Mammary epithelial cell (primary cell): ENCODE measurements at regions of chr14 and their contacts with region 1.

Region 1: GRCh38 chr14:105086833-105087307 is 21.6 kb upstream of the GPR132 start:
- DNase-seq: peak; percentile 76
- H3K4me3 ChIP-seq: peak overlapping the region; percentile 42 to 51 (median 50)
- H3K27ac ChIP-seq: peak overlapping the region; percentile 54
- H3K4me1 ChIP-seq: peaks cover 44% of the 10 kb centered on the region
- H3K27me3 ChIP-seq: no peaks in the 10 kb centered on the region
- CTCF ChIP-seq: peak; percentile 62 to 76

Region 2: GRCh38 chr14:104976198-104977007 is 110.5 kb before region 1 on chr14:
- CTCF ChIA-PET with region 1: no interaction called
- dilution Hi-C with region 1: no loop called
- in situ Hi-C with region 1: no loop called
- intact Hi-C with region 1: loop called (anchors 1 kb)
- DNase-seq: peak; percentile 86
- H3K4me3 ChIP-seq: peak overlapping the region; percentile 75 to 82 (median 79)
- H3K27ac ChIP-seq: no peak overlapping the region
- H3K4me1 ChIP-seq: peaks cover 78% of the 10 kb centered on the region
- H3K27me3 ChIP-seq: no peaks in the 10 kb centered on the region
- CTCF ChIP-seq: peak; percentile 81 to 97

Region 3: DNA sequence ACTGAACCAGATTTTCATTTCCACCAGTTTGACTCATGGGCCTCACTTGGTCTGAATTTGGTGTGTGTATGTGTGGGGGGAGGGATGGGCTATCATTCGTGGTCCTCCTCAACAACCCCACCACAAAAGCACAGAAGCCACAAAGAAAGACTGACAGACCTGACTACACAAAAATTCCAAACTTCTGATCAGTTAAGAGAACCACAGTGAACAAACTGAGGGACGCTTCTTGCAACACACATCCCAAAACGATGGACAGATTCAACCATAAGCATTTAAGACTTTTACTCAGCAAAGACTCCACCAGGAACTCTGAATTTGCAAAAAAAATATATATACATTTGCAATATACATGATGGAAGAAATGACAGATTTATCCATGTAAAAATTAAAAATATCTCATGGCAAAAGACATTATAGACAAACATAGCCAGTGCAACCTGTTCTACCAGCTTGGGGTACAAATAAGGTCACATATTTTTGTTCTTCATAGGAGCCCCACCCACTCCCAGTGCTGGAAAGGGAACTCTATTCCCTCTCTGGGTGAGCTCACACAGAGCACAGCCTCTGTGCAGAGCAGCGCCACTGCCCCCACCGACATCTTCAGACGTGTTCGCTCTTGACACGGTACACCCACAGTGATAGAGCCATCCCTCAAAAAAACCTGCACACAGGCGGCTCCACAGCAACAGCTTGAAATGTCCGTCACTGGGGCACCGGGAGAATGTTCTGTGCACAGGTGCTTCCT is 32.0 kb after region 1 on chr14:
- CTCF ChIA-PET with region 1: interaction called, 5 read pairs
- dilution Hi-C with region 1: no loop called
- in situ Hi-C with region 1: no loop called
- intact Hi-C with region 1: loop called (anchors 2 kb)
- DNase-seq: peak; percentile 77
- H3K4me3 ChIP-seq: no peak overlapping the region
- H3K27ac ChIP-seq: no peak overlapping the region
- H3K4me1 ChIP-seq: peaks cover 24% of the 10 kb centered on the region
- H3K27me3 ChIP-seq: no peaks in the 10 kb centered on the region
- CTCF ChIP-seq: no peak

Region 4: DNA sequence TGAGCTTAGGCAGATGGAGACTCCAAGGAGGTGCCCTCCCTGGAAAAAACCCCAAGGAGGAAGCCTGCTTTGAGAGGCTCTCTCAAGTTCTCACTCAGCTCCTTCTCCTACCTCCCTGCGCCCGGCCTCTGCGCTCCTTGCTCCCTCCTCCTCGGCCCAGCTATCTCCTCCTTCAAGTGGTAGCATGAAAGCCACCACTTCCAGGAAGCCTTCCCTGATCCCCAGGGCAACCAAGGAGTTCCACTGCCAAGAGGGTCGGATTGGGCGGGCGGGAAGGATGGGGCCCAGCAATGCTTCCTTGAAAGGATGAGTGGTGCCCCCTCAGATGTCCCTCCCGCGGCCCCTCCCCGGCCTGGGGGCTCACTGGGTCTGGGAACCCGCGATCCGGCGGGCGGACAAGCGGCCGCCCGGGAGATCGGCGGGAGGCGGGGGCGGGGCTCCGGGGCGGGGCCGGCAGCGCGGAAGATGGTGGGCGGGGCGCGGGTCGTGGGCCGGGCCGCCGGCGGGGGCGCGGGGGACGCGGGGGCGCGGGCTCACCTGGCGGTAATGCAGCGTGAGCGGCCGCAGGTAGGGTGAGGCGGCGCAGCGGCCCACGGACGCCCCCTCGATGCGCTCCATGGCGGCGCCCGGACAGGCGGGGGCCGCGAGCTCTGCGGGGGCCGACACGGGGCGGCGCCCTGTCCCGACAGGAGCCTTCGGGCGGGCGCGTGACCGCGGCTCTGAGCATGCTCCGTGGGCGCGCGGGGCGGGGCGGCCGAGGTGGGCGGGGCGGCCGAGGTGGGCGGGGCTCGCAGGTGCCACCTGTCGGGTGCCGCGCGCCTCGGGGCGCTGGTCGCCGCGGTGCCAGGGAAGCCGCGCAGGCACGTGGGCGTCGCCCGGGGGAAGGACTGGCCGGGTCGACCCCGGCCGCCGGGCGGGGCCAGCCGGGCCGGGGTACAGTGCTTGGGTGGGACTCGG is 94.0 kb after region 1 on chr14 and contains the start of gene NUDT14:
- CTCF ChIA-PET with region 1: no interaction called
- dilution Hi-C with region 1: no loop called
- in situ Hi-C with region 1: no loop called
- intact Hi-C with region 1: loop called (anchors 5 kb)
- DNase-seq: peak; percentile 68
- H3K4me3 ChIP-seq: peak within 1 kb of the TSS; percentile 40 to 68 (median 54)
- H3K27ac ChIP-seq: no peak within 1 kb of the TSS
- H3K4me1 ChIP-seq: peaks cover 9% of the 10 kb centered on the region
- H3K27me3 ChIP-seq: no peaks in the 10 kb centered on the region
- CTCF ChIP-seq: no peak
- total RNA-seq, gene NUDT14: 32.0 to 41.9 TPM

Region 5: DNA sequence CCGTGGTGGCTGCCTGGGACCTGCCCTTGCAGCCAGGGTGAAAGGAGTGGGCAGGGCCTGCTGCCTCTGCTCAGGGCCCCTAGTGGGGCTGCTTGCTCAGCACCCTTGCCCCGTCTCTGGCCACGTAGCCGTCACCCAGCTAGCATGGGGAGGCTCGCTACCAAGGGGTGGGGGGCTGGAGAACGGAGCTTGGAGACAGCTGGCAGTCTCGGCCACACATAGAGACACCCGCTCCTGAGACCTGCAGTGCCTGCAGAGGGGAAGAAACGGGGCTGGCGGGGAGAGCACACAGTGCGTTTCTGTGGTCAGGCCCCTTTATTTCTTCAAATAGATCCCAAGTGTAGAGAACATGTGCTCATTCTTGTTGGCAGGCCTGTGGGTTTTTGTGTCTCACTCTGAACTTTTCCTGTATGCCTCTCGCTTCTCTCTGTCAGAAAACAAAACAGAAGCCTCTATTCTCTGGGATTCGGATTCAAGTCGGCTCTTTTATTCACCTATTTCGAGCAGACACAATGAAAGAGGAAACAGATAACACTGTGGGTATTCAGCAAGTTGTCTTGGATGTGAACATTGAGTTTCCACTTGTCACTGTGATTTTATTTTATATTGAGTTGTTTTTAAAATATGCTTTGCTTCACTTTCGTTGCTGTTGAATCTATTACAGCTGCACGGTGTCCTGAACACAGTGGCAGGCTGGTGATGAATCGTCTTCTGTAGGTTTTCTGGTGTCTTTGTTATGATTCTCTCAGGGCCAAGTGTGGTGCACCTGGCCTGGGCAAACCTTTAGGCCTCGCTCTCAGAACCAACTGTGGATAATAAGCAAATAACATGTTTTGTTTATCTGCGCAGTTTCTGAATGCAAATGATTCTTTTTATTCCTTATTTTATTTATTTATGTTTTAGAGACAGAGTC is 254.2 kb after region 1 on chr14:
- CTCF ChIA-PET with region 1: no interaction called
- dilution Hi-C with region 1: no loop called
- in situ Hi-C with region 1: loop called in 1 of 2 experiments (anchors 10 kb)
- intact Hi-C with region 1: no loop called
- DNase-seq: no peak
- H3K4me3 ChIP-seq: no peak overlapping the region
- H3K27ac ChIP-seq: no peak overlapping the region
- H3K4me1 ChIP-seq: no peaks in the 10 kb centered on the region
- H3K27me3 ChIP-seq: no peaks in the 10 kb centered on the region
- CTCF ChIP-seq: no peak

Region 6: GRCh38 chr14:105490572-105491366 is 403.9 kb after region 1 on chr14 and contains the start of gene TEDC1:
- CTCF ChIA-PET with region 1: no interaction called
- dilution Hi-C with region 1: no loop called
- in situ Hi-C with region 1: no loop called
- intact Hi-C with region 1: loop called (anchors 5 kb)
- DNase-seq: peak; percentile 100
- H3K4me3 ChIP-seq: peak within 1 kb of the TSS; percentile 67 to 77 (median 70)
- H3K27ac ChIP-seq: peak within 1 kb of the TSS; percentile 90
- H3K4me1 ChIP-seq: peaks cover 27% of the 10 kb centered on the region
- H3K27me3 ChIP-seq: no peaks in the 10 kb centered on the region
- CTCF ChIP-seq: peak; percentile 51 to 65
- total RNA-seq, gene TEDC1: 3.5 to 21.3 TPM